Ovary (tissue), 10 donors: ENCODE measurements at regions of chr16 and their contacts with region 1.

Region 1: GRCh38 chr16:4506450-4506849 is 30.3 kb downstream of the HMOX2 start:
- DNase-seq: peak in 3 of 5 donors; percentile 48 to 70 (median 55)
- H3K4me3 ChIP-seq: no peak overlapping the region
- H3K27ac ChIP-seq: no peak overlapping the region
- H3K4me1 ChIP-seq: peaks cover 2% of the 10 kb centered on the region
- H3K27me3 ChIP-seq: no peaks in the 10 kb centered on the region
- CTCF ChIP-seq: peak; percentile 63 to 78 (median 71)
- EP300 ChIP-seq: no peak
- POLR2A ChIP-seq: no peak

Region 2: GRCh38 chr16:4487955-4488498 is 18.4 kb before region 1 on chr16:
- intact Hi-C with region 1: no loop called
- DNase-seq: no peak
- H3K4me3 ChIP-seq: no peak overlapping the region
- H3K27ac ChIP-seq: no peak overlapping the region
- H3K4me1 ChIP-seq: no peaks in the 10 kb centered on the region
- H3K27me3 ChIP-seq: no peaks in the 10 kb centered on the region
- CTCF ChIP-seq: no peak
- EP300 ChIP-seq: no peak
- POLR2A ChIP-seq: no peak

Region 3: DNA sequence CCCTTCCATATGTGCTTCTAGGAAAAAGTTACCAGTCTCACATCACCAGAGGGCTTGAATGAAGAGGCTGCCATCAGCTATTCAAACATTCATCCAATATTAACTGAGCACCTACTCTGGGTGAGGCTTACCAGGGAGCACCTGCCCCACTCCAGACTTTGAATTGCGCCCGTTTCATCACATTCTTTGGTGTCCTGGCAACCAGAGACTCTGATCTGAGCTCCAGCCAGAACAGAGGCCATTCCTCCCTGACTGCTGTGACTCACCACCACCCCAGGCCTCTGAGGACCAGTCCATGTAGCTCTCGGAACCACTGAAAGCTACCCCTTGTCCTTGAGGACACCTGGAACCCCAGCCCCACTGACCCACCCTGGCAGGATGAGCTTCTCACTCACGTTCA is 49.7 kb after region 1 on chr16 and contains the start of gene C16orf96:
- intact Hi-C with region 1: loop called in 1 of 4 experiments (anchors 10 kb)
- DNase-seq: no peak
- H3K4me3 ChIP-seq: no peak within 1 kb of the TSS
- H3K27ac ChIP-seq: no peak within 1 kb of the TSS
- H3K4me1 ChIP-seq: no peaks in the 10 kb centered on the region
- H3K27me3 ChIP-seq: no peaks in the 10 kb centered on the region
- CTCF ChIP-seq: no peak
- EP300 ChIP-seq: no peak
- POLR2A ChIP-seq: no peak
- total RNA-seq, gene C16orf96: 0.10 to 0.30 (median 0.13) TPM

Region 4: DNA sequence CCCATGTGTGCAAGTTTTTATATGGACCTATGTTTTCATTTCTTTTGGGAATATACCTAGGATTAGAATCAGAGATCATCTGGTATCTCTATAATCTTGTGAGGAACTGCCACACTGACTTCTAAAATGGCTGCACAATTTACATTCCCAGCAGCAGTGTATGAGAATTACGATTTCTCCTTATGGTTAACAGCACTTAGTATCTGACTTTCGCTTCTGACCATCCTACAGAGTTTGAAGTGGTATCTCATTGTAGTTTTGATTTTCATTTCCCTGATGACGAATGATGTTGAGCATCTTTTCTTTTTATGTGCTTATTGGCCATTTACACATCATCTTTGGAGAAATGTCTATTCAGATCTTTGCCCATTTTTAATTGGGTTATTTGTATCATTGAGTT is 59.7 kb after region 1 on chr16:
- intact Hi-C with region 1: no loop called
- DNase-seq: no peak
- H3K4me3 ChIP-seq: no peak overlapping the region
- H3K27ac ChIP-seq: no peak overlapping the region
- H3K4me1 ChIP-seq: no peaks in the 10 kb centered on the region
- H3K27me3 ChIP-seq: no peaks in the 10 kb centered on the region
- CTCF ChIP-seq: no peak
- EP300 ChIP-seq: no peak
- POLR2A ChIP-seq: no peak

Region 5: DNA sequence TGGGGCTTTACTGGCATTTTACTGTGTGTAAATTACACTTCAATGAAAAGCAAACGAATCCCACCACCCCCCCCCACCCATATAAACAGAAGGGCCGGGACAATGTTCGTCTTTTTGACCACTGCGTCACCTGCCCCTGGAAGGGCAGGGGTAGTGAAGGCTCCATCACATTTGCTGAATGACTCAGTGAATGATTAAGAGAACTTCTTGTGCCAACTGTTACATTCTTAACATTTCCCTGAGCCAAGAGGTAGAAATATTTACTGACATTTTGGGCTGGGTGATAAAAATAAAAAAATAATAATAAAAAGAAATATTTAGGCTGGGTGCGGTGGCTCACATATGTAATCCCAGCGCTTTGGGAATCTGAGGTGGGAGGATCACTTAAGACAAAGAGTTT is 73.8 kb after region 1 on chr16:
- intact Hi-C with region 1: loop called in 2 of 4 experiments (anchors 10 kb)
- DNase-seq: no peak
- H3K4me3 ChIP-seq: no peak overlapping the region
- H3K27ac ChIP-seq: no peak overlapping the region
- H3K4me1 ChIP-seq: no peaks in the 10 kb centered on the region
- H3K27me3 ChIP-seq: no peaks in the 10 kb centered on the region
- CTCF ChIP-seq: no peak
- EP300 ChIP-seq: no peak
- POLR2A ChIP-seq: no peak

Region 6: DNA sequence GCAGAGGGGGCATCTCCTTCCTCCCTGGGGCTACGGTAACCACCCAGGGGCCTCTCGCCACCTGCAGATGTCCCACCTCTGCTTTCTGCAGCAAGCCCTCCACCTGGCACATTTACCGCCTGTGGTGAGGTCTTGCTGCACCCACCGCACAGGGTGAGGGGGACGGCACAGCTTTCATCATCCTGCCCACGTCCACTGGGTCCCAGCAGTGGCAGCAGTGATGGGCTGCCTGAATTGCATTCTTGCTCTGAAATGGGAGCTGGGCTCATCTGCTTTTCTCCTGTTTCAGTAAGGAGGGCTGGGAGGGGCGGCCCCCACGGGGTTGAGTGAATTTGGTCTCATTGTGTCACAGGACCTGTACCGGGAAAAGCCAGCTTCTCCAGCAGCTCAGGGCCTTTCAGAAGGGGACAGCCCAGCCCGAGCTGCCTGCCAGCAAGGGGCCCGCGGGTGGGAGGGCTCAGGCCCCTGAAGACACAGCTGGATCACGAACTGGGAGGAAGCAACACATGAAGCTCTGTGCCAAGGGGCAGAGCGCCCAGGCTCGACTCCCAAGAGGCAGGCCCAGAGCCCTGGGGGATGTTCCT is 240.6 kb after region 1 on chr16:
- intact Hi-C with region 1: loop called in 1 of 4 experiments (anchors 10 kb)
- DNase-seq: peak in 4 of 5 donors; percentile 53 to 75 (median 63)
- H3K4me3 ChIP-seq: no peak overlapping the region
- H3K27ac ChIP-seq: peak overlapping the region in 1 of 2 donors; percentile 49
- H3K4me1 ChIP-seq: peaks cover 11% of the 10 kb centered on the region
- H3K27me3 ChIP-seq: no peaks in the 10 kb centered on the region
- CTCF ChIP-seq: no peak
- EP300 ChIP-seq: no peak
- POLR2A ChIP-seq: no peak